RWPE1 (cell line): ENCODE measurements at regions of chr19 and their contacts with region 1.

Region 1: GRCh38 chr19:40305403-40305802 is 20.3 kb upstream of the AKT2 start:
- DNase-seq: peak; percentile 82
- H3K27ac ChIP-seq: no peak overlapping the region
- CTCF ChIP-seq: peak; percentile 82

Region 2: GRCh38 chr19:40084948-40085347 is 220.5 kb before region 1 on chr19:
- CTCF ChIA-PET with region 1: interaction called, 10 read pairs
- POLR2A ChIA-PET with region 1: no interaction called
- DNase-seq: no peak
- H3K27ac ChIP-seq: no peak overlapping the region
- CTCF ChIP-seq: no peak

Region 3: DNA sequence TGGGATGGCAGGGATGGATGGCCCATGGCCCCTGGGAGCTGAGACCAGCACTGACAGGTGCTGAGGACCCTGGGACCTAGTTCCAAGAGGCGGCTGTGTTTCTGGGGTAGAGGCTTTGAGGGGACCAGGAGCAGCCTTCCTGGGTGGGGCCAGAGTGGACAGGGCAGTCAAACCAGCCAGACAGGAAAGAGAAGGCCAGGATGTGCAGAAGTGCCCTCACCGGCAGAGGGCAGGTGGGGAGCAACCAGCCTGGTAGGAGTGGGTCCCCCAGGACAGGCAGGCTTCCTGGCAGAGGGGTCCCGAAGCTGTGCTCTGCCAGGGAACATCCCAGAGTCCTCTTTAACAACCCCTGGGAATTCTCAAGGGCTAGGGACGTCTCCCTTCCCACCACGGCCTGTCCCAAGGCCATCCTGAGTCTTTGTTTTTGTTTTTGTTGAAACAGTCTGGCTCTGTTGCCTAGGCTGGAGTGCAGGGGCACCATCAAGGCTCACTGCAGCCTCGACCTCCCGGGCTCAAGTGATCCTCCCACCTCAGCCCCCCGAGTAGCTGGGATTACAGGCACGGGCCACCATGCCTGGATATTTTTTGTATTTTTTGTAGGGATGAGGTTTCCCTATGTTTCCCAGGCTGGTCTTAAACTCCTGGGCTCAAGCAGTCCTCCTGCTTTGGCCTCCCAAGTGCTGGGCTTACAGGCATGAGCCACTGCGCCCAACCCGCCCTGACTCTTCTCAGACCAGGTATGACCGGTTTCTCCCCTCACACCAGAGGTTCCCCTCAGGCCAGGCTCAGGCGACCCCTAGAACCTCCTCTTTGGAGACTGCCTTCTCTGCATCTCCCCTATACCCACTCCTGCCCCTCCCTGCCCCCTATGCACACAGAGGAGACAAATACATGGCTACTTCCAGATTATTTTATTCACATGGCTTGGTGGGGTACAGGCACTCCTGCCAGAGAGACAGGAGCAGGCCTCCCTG is 87.8 kb after region 1 on chr19:
- CTCF ChIA-PET with region 1: no interaction called
- POLR2A ChIA-PET with region 1: no interaction called
- DNase-seq: peak; percentile 37
- H3K27ac ChIP-seq: peak overlapping the region; percentile 10; the same call in 1 of the 2 replicates
- CTCF ChIP-seq: no peak; the same call in 1 of the 2 replicates

Region 4: GRCh38 chr19:40403262-40403984 is 98.0 kb after region 1 on chr19:
- CTCF ChIA-PET with region 1: no interaction called
- POLR2A ChIA-PET with region 1: interaction called, 15 read pairs
- DNase-seq: peak; percentile 95
- H3K27ac ChIP-seq: peak overlapping the region; percentile 86
- CTCF ChIP-seq: no peak